ENCODE measurements at regions of chr10 and their contacts with region 1.

Region 1: GRCh38 chr10:95693668-95694534 is at the start of gene TCTN3:
- DNase-seq: peak; percentile 97 to 100
- H3K4me3 ChIP-seq: peak within 1 kb of the TSS; percentile 77 to 87 (median 82)
- H3K27ac ChIP-seq: peak within 1 kb of the TSS; percentile 83 to 88 (median 85)
- H3K4me1 ChIP-seq: peaks cover 7 to 34% (median 28%) of the 10 kb centered on the region in 4 donors
- H3K27me3 ChIP-seq: no peaks in the 10 kb centered on the region
- CTCF ChIP-seq: peak in 6 of 7 experiments; percentile 93 to 100 (median 99)
- EP300 ChIP-seq: no peak
- POLR2A ChIP-seq: peak in 2 of 4 donors; percentile 39 to 83
- total RNA-seq, gene TCTN3: 1.2 to 31.6 (median 9.3) TPM

Region 2: DNA sequence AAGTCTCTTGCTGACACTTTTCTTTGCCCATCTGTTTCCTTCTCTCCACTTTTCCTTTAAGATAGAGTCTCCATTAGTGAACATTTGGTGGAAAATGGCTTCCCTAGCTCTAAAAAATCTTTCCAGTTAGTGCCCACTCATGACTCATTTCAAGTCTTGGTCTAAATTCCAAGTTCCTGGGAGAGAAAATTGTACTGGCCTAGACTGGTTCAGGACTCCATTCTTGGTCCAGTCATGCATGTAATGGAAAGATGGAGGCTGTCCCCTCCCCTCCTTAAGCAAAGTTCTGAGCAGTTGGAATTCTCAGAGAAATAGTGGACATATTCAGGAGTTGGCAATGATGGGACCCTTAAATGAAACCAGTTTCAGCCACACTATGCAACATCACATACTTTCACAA is 33.6 kb before region 1 on chr10:
- intact Hi-C with region 1: no loop called
- DNase-seq: no peak
- H3K4me3 ChIP-seq: no peak overlapping the region
- H3K27ac ChIP-seq: no peak overlapping the region
- H3K4me1 ChIP-seq: peaks cover 6 to 30% (median 17%) of the 10 kb centered on the region in 4 donors
- H3K27me3 ChIP-seq: no peaks in the 10 kb centered on the region
- CTCF ChIP-seq: no peak
- EP300 ChIP-seq: no peak
- POLR2A ChIP-seq: no peak

Region 3: DNA sequence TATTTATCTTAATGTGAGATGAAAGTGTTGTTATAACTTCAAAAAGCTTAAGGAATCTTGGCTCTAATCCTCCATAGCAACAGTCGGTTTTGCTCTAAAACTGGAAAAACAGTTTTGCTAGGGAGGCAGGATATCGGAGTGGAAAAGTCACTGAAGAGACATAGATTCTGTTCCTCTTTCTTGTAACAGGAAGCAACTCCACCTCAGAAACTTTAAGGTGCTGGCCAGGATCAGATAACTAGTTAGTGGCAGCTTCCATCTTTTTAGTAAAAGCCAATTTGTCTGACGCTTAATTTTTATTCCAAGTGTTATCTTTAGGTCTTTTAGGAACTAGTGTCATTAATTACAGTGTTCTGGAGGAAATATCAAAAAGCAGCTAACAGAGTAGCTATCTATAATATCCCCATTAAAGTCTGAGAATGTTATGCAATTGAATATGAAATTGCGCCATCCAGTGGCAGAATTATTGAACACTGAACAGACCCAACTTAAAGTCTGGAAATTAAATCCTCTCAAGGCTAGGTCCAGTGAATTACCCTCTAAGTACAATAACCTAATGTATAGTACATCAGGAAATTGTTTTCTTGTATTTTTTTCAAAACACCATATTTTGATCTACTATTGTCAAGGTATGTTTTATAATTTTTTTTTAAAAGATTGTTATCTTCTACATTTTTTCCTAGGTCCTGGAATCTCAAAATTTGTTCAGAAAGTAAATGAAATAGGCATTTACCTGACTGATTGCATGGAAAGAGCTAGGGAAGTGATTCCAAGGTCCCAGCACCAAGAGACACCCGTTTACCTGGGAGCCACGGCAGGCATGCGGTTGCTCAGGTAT is 148.0 kb after region 1 on chr10:
- intact Hi-C with region 1: loop called (anchors 5 kb)
- DNase-seq: peak; percentile 43 to 85
- H3K4me3 ChIP-seq: no peak overlapping the region
- H3K27ac ChIP-seq: peak overlapping the region in 3 of 5 donors; percentile 26 to 60 (median 54)
- H3K4me1 ChIP-seq: peaks cover 0 to 42% (median 19%) of the 10 kb centered on the region in 4 donors
- H3K27me3 ChIP-seq: no peaks in the 10 kb centered on the region
- CTCF ChIP-seq: peak in 4 of 7 experiments; percentile 54 to 78 (median 68)
- EP300 ChIP-seq: no peak
- POLR2A ChIP-seq: no peak